Mammary epithelial cell (primary cell): ENCODE measurements at regions of chr9 and their contacts with region 1.

Region 1: DNA sequence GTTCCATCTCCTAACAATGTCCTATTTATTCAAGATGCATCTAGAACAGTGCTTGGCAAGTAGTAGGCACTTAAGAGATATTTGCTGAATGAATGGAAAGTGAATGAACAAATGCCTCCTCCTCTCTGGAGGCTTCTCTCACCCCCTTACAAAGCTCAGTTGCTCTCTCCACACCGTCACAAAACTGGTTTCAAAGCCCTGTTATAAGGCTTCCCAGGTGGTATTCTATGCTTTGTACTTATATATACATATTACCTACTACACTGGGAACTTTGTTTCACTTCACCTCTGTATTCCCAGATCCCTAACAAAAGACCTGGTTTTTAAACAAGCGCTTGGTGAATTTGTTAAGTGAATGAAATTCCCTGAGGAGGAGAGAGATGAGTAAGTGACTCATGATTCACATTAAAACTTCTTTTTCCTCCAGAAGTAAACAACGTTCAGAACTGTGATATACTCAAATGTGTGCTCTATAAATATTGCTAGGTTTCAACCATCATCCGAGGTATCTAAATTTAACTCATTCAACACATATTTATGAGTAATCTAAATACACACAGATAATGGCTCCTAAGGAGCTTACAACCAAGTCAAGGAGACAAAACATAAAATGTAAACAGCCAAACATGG is 36.0 kb downstream of the DENND1A start:
- DNase-seq: no peak
- H3K4me3 ChIP-seq: no peak overlapping the region
- H3K27ac ChIP-seq: no peak overlapping the region
- H3K4me1 ChIP-seq: no peaks in the 10 kb centered on the region
- H3K27me3 ChIP-seq: no peaks in the 10 kb centered on the region
- CTCF ChIP-seq: no peak

Region 2: DNA sequence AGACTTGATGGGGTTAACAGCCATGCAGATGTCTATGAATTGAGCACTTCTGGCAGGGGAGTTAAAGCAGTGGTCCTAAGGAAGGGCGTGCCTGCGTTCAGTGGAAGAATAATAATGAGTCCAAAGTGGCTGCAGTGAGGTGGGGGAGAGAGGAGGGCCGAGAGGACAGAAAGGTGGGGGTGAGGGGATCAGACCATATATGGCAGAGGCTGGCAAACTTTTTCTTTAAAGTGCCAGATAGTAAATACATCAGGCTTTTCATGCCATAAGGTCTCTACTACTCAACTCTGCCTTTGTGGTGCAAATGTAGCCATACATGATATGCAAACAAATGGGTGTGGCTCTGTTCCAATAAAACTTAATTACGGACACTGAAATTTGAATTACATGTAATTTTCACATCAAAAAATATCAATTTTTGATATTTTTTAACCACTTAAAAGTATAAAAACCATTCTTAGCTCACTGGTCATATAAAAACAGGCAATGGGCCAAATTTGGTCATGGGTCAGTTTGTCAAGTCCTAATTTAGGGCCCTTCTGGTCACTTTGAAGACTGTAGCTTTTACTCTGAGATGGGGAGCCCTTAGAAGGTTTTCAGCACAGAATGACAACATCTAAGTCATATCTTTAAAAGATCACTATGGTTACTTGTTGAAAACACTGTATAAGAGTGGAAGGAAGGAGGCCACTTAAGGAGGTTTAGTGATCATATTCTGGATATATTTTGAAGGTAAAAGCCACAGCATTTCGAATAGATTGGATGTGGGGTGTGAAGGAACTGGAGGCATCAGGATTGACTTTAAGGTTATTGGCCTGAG is 702.5 kb before region 1 on chr9:
- CTCF ChIA-PET with region 1: no interaction called
- dilution Hi-C with region 1: no loop called
- in situ Hi-C with region 1: no loop called
- intact Hi-C with region 1: no loop called
- DNase-seq: no peak
- H3K4me3 ChIP-seq: no peak overlapping the region
- H3K27ac ChIP-seq: no peak overlapping the region
- H3K4me1 ChIP-seq: no peaks in the 10 kb centered on the region
- H3K27me3 ChIP-seq: no peaks in the 10 kb centered on the region
- CTCF ChIP-seq: no peak

Region 3: GRCh38 chr9:123445981-123446610 is 447.9 kb before region 1 on chr9:
- CTCF ChIA-PET with region 1: no interaction called
- dilution Hi-C with region 1: no loop called
- in situ Hi-C with region 1: no loop called
- intact Hi-C with region 1: no loop called
- DNase-seq: no peak
- H3K4me3 ChIP-seq: no peak overlapping the region
- H3K27ac ChIP-seq: no peak overlapping the region
- H3K4me1 ChIP-seq: no peaks in the 10 kb centered on the region
- H3K27me3 ChIP-seq: no peaks in the 10 kb centered on the region
- CTCF ChIP-seq: no peak

Region 4: DNA sequence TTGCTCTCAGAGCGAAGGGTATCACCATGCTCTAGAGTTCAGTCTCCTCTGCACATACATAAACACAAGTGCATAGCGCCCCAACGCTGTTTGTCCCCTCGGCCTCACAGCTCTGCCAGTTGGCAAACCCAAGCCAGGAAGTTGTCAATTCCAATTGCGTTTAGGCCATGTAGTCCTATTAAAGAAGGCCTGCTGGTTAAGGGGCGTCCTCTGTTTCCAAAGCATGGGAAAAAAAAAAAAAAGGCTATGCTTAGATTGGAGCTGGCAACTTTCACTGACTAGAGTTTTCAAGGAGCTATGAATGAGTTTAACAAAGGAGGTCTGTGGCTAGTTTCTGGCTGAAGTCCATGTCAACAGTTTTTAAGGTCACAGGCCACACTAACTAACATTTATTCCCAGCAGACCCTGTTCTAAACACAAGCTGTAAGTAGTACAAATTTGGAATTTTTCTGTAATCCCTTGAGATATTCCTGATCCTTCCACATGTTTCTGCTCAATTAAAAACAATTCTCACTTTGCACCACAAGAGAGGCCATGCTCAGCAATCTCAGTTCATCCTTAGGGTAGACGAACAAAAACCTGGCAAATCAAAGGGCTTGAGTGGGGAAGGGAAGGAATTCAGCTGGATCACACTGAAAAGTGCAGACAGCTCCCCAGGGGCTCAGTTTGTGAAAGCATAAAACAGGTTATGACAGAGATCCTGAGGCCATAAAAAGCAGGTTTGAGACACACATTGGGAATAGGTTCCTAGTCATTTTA is 151.8 kb before region 1 on chr9:
- CTCF ChIA-PET with region 1: no interaction called
- dilution Hi-C with region 1: no loop called
- in situ Hi-C with region 1: no loop called
- intact Hi-C with region 1: no loop called
- DNase-seq: no peak
- H3K4me3 ChIP-seq: no peak overlapping the region
- H3K27ac ChIP-seq: no peak overlapping the region
- H3K4me1 ChIP-seq: no peaks in the 10 kb centered on the region
- H3K27me3 ChIP-seq: no peaks in the 10 kb centered on the region
- CTCF ChIP-seq: no peak

Region 5: DNA sequence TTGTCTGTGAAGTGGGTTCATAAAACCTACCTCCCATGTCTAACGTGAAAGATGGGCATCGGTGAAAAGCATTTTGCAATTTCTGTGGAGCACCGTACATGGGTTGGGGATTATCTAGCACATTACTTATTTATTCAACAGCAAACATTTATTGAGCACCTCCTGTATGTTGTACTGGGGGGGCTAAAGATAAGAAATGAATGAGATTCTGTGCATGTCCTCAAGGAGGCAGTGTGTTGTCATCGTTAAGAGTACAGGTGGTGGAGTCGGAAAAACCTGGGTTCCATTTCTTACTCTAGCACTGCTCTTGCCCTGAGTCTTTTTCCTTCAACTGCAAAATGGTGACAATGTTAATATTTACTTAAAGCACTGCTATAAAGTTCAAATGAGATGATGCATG is 66.4 kb after region 1 on chr9:
- CTCF ChIA-PET with region 1: no interaction called
- dilution Hi-C with region 1: loop called (anchors 5 kb)
- in situ Hi-C with region 1: no loop called
- intact Hi-C with region 1: no loop called
- DNase-seq: no peak
- H3K4me3 ChIP-seq: no peak overlapping the region
- H3K27ac ChIP-seq: no peak overlapping the region
- H3K4me1 ChIP-seq: no peaks in the 10 kb centered on the region
- H3K27me3 ChIP-seq: no peaks in the 10 kb centered on the region
- CTCF ChIP-seq: peak in 1 of 2 donors; percentile 5